ENCODE measurements at regions of chr10 and their contacts with region 1.

Region 1: GRCh38 chr10:70162892-70163201 is 7.5 kb downstream of the SAR1A start:
- DNase-seq: peak; percentile 87
- H3K4me3 Mint-ChIP-seq: peak overlapping the region; percentile 20
- H3K27ac Mint-ChIP-seq: peak overlapping the region; percentile 95
- H3K4me1 Mint-ChIP-seq: peaks cover 65% of the 10 kb centered on the region
- H3K27me3 Mint-ChIP-seq: no peaks in the 10 kb centered on the region

Region 2: GRCh38 chr10:70197235-70197945 is 34.5 kb after region 1 on chr10:
- CTCF ChIA-PET with region 1: no interaction called
- intact Hi-C with region 1: loop called (anchors 5 kb)
- DNase-seq: no peak
- H3K4me3 Mint-ChIP-seq: no peak overlapping the region
- H3K27ac Mint-ChIP-seq: no peak overlapping the region
- H3K4me1 Mint-ChIP-seq: peaks cover 15% of the 10 kb centered on the region
- H3K27me3 Mint-ChIP-seq: no peaks in the 10 kb centered on the region